ENCODE measurements at regions of chr2 and their contacts with region 1.

Region 1: DNA sequence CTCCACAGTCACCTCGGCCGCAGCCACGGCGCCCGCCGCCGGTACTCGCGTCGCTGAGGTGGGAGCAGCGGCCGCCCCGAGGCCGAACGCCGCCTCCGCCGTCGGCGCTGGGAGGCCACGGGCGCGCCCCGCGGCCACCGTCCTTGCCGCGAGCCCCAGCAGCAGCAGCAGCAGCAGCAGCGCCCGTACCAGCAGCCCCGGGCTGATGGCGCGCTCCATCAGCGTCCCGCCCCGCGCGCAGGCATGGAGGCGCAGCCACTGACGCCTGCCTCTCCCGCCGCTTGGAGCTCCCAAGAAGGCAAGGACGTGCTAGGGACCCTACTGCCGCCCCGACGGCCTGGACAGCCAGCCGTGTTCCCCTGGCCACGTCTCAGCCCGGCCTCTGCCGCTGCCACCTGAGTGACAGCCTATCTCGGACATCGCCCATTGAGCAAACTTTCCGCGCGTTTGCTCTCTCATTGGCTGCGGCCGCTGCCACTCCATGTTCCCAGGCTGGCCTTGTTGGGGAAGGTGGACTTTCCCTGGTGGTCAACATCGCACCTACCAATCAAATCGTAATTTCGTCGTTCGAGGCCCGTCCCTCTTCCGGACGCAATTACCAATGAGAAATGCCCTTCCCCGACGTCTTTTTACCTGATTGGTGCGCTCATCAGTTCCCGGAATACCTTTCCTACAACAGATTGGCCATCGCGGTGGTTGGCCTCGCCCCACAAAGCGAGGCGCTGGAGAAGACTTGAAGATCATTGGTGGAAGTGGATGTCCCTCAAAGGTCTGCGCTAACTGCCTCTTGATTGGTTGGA is at the start of gene EIF2AK3:
- DNase-seq: peak; percentile 97 to 100
- H3K4me3 ChIP-seq: peak within 1 kb of the TSS; percentile 73
- H3K27ac ChIP-seq: peak within 1 kb of the TSS; percentile 95
- H3K4me1 ChIP-seq: peaks cover 26% of the 10 kb centered on the region
- H3K27me3 ChIP-seq: no peaks in the 10 kb centered on the region
- CTCF ChIP-seq: no peak
- total RNA-seq, gene EIF2AK3: 8.8 and 12.1 TPM in 2 replicates

Region 2: GRCh38 chr2:88590998-88591613 is 36.1 kb before region 1 on chr2:
- CTCF ChIA-PET with region 1: no interaction called
- POLR2A ChIA-PET with region 1: no interaction called
- intact Hi-C with region 1: loop called (anchors 5 kb)
- DNase-seq: peak; percentile 35 to 44
- H3K4me3 ChIP-seq: no peak overlapping the region
- H3K27ac ChIP-seq: no peak overlapping the region
- H3K4me1 ChIP-seq: no peaks in the 10 kb centered on the region
- H3K27me3 ChIP-seq: no peaks in the 10 kb centered on the region
- CTCF ChIP-seq: peak; percentile 90

Region 3: GRCh38 chr2:88600038-88600465 is 27.2 kb before region 1 on chr2:
- CTCF ChIA-PET with region 1: no interaction called
- POLR2A ChIA-PET with region 1: interaction called, 3 read pairs
- intact Hi-C with region 1: loop called (anchors 2 kb)
- DNase-seq: peak; percentile 57 to 98
- H3K4me3 ChIP-seq: no peak overlapping the region
- H3K27ac ChIP-seq: peak overlapping the region; percentile 77
- H3K4me1 ChIP-seq: peaks cover 23% of the 10 kb centered on the region
- H3K27me3 ChIP-seq: no peaks in the 10 kb centered on the region
- CTCF ChIP-seq: no peak

Region 4: GRCh38 chr2:88614497-88615157 is 12.6 kb before region 1 on chr2:
- CTCF ChIA-PET with region 1: no interaction called
- POLR2A ChIA-PET with region 1: interaction called, 29 read pairs
- intact Hi-C with region 1: no loop called
- DNase-seq: no peak
- H3K4me3 ChIP-seq: no peak overlapping the region
- H3K27ac ChIP-seq: no peak overlapping the region
- H3K4me1 ChIP-seq: peaks cover 9% of the 10 kb centered on the region
- H3K27me3 ChIP-seq: no peaks in the 10 kb centered on the region
- CTCF ChIP-seq: no peak

Region 5: DNA sequence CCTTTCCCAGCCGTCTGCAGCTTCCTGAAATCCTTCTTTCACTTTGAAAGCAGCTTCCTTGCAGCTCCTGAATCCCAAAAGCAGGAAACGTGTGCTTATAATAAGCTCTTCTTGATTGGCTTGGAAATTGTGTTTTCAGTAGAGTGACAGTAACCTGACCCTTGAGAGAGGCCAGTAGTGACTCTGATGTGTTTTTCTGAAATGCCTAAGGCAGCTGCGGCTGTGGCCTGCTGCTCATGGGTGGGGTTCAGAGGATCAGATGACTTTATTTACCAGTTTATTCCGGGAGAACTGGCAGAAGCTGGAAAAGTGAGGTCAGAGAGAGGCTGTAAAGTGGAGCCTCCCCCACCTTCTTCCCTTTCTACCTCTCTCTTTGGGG is 32.3 kb after region 1 on chr2:
- CTCF ChIA-PET with region 1: no interaction called
- POLR2A ChIA-PET with region 1: interaction called, 14 read pairs
- intact Hi-C with region 1: loop called (anchors 1 kb)
- DNase-seq: peak; percentile 72 to 91
- H3K4me3 ChIP-seq: peak overlapping the region; percentile 34; the same call in 1 of the 2 replicates
- H3K27ac ChIP-seq: peak overlapping the region; percentile 70
- H3K4me1 ChIP-seq: peaks cover 39% of the 10 kb centered on the region
- H3K27me3 ChIP-seq: no peaks in the 10 kb centered on the region
- CTCF ChIP-seq: no peak

Region 6: DNA sequence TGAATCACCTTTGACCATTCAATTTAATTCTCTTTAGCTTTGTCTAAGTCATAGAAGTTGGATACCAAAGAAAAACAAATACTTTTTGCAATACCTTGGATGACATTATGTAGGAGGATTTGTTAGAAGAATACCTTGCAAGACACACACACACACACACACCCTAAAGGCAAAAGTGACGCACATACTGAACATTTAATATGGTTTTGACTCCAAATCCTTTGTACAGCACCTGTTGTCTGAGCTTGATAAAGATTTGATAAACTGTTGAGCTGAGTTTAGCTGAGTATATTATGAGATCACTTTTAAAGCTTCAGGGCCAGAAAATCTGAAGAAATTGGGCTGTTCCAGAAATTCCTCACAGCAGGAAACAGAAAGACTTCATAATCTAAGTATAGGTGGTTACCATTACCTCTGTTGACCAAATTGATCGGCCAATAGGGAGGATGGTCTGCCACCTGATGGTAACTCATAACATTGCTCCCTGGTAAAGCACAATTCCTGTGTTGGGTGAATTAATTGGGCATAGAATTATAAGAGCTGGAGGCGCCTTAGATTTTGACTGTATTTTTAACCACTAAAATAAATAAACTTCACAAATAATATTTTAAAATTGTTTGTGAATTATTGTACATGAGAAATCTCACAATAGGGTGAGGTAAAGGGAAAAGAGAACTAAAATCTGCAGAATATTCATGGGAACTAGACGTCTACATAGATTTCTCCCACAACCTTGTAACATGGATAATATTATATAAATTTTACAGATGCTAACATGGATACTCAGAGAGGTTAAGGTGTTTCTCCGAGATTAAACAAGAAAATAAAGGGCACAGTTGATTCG is 42.3 kb after region 1 on chr2:
- CTCF ChIA-PET with region 1: interaction called, 7 read pairs
- POLR2A ChIA-PET with region 1: no interaction called
- intact Hi-C with region 1: loop called (anchors 2 kb)
- DNase-seq: peak; percentile 26 to 57
- H3K4me3 ChIP-seq: no peak overlapping the region
- H3K27ac ChIP-seq: no peak overlapping the region
- H3K4me1 ChIP-seq: no peaks in the 10 kb centered on the region
- H3K27me3 ChIP-seq: no peaks in the 10 kb centered on the region
- CTCF ChIP-seq: peak; percentile 81

Measured in PC-9 (cell line).